ENCODE measurements at regions of chr12 and their contacts with region 1.

Region 1: DNA sequence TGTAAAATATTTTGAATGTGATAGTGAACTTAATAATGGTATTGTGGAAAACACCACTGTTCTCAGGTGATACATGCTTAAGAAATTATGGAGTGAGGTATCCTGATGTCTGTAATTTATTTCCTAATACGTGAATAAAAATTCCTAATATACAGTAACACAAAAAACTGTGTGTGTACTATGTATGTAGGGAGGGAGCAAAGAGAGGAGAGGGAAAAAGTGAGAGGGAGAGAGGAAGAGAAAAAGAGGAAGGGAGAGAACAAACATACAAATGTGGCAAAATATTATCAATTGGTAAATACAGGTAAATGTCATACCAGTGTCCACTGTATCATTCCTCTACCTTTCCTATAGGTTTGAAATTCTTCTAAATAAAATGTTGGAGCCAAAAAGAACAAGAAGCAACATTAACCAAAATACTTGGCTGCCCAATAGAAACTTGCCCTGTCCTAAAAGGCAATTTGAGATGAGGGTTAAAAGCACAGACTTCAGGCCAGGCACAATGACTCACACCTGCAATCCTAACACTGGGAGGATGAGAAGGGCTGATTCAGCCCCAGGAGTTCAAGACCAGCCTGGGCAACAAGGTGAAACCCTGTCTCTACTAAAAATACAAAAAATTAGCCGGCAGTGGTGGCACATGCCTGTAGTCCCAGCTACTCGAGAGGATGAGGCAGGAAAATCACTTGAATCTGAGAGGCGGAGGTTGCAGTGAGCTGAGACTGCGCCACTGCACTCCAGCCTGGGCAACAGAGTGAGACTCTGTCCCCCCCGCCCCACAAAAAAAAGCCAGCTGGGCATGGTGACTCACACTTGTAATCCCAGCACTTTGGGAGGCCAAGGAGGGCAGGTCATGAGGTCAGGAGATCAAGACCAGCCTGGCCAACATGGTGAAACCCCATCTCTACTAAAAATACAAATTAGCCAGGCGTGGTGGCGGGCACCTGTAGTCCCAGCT is 14.5 kb downstream of the R3HDM2 start:
- DNase-seq: no peak
- H3K4me3 ChIP-seq: no peak overlapping the region
- H3K4me3 Mint-ChIP-seq: no peak overlapping the region
- H3K27ac Mint-ChIP-seq: no peak overlapping the region
- H3K4me1 ChIP-seq: no peaks in the 10 kb centered on the region
- H3K4me1 Mint-ChIP-seq: no peaks in the 10 kb centered on the region
- H3K27me3 ChIP-seq: no peaks in the 10 kb centered on the region
- H3K27me3 Mint-ChIP-seq: no peaks in the 10 kb centered on the region
- CTCF ChIP-seq: no peak

Region 2: GRCh38 chr12:57248934-57249742 is 167.2 kb before region 1 on chr12:
- CTCF ChIA-PET with region 1: no interaction called
- POLR2A ChIA-PET with region 1: no interaction called
- intact Hi-C with region 1: no loop called
- DNase-seq: no peak
- H3K4me3 ChIP-seq: no peak overlapping the region
- H3K4me3 Mint-ChIP-seq: no peak overlapping the region
- H3K27ac Mint-ChIP-seq: no peak overlapping the region
- H3K4me1 ChIP-seq: no peaks in the 10 kb centered on the region
- H3K4me1 Mint-ChIP-seq: no peaks in the 10 kb centered on the region
- H3K27me3 ChIP-seq: peaks cover 2% of the 10 kb centered on the region; the same call in 1 of the 2 replicates
- H3K27me3 Mint-ChIP-seq: peaks cover 2% of the 10 kb centered on the region
- CTCF ChIP-seq: no peak

Region 3: GRCh38 chr12:57319678-57320469 is 96.4 kb before region 1 on chr12:
- CTCF ChIA-PET with region 1: no interaction called
- POLR2A ChIA-PET with region 1: interaction called, 12 read pairs
- intact Hi-C with region 1: no loop called
- DNase-seq: no peak
- H3K4me3 ChIP-seq: no peak overlapping the region
- H3K4me3 Mint-ChIP-seq: no peak overlapping the region
- H3K27ac Mint-ChIP-seq: no peak overlapping the region
- H3K4me1 ChIP-seq: peaks cover 14% of the 10 kb centered on the region
- H3K4me1 Mint-ChIP-seq: peaks cover 8% of the 10 kb centered on the region
- H3K27me3 ChIP-seq: no peaks in the 10 kb centered on the region
- H3K27me3 Mint-ChIP-seq: no peaks in the 10 kb centered on the region
- CTCF ChIP-seq: no peak

Measured in Caco-2 (cell line).